Ovary (tissue), 10 donors: ENCODE measurements at regions of chr6 and their contacts with region 1.

Region 1: GRCh38 chr6:110322874-110323242 is 35.3 kb downstream of the METTL24 start:
- DNase-seq: no peak
- H3K4me3 ChIP-seq: no peak overlapping the region
- H3K27ac ChIP-seq: no peak overlapping the region
- H3K4me1 ChIP-seq: peaks cover 16% of the 10 kb centered on the region
- H3K27me3 ChIP-seq: no peaks in the 10 kb centered on the region
- CTCF ChIP-seq: no peak
- EP300 ChIP-seq: no peak
- POLR2A ChIP-seq: no peak

Region 2: DNA sequence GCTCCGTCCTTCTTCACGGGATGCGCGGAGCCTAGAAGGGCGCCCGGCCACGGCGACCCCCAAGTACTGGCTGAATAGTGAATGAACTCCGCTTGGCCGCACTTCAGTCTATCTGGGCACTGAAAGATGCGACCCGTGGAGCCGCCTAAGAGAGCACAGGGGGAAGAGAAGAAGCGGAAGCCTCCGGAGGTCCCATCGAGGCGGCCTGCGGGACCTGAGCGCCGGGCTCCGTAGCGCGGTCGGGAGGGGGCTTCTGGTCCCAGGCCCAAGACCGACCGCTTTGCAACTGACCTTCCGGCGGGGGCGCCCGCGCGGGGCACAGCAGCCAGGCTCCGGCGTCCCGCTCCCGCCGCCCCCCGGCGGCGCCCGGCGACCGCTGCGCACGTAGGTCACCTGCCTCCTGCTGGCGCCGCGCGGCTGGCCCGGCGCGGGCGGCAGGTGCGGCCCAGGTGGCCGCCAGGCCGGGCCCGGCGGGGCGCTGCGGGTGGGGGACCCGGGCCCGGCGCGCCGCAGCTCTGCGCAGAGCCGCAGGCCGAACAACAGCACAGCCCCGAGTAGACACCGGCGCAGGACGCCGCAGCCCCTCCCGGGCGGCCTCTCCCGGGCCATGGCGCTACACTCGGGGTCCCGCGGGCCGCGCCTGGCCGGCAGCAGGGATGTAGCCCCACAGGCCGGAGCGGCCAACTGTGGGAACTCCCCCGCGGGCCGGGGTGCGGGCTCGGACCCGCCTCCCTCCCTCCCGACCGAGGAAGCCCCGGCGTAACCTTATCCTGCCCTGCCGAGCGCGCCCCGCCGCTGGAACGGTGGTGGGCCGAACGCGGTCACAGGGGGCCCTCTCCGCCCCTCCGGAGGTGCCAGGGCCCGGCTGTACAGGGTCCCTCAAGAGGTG is 35.0 kb after region 1 on chr6 and contains the start of gene METTL24:
- intact Hi-C with region 1: loop called in 1 of 4 experiments (anchors 5 kb)
- DNase-seq: peak; percentile 57 to 72 (median 65)
- H3K4me3 ChIP-seq: peak within 1 kb of the TSS; percentile 72
- H3K27ac ChIP-seq: peak within 1 kb of the TSS; percentile 69 to 93
- H3K4me1 ChIP-seq: peaks cover 3% of the 10 kb centered on the region
- H3K27me3 ChIP-seq: no peaks in the 10 kb centered on the region
- CTCF ChIP-seq: no peak
- EP300 ChIP-seq: no peak
- POLR2A ChIP-seq: no peak
- total RNA-seq, gene METTL24: 5.7 to 13.5 (median 9.2) TPM

Region 3: DNA sequence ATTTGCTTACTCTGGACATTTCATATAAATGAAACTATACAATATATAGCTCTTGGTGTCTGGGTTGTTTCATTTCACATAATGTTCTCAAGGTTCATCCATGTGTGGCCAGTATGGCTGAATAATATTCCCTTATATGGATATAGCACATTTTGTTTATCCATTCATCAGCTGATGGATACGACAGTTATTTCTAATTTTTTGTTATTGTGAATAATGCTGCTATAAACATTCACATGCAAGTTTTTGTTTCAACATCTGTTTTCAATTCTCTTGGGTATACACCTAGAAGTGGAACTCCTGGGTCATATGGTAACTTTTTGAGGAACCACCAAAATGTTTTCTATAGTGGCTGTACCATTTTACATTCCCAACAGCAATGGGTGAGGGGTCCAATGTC is 391.3 kb after region 1 on chr6:
- intact Hi-C with region 1: no loop called
- DNase-seq: no peak
- H3K4me3 ChIP-seq: no peak overlapping the region
- H3K27ac ChIP-seq: no peak overlapping the region
- H3K4me1 ChIP-seq: no peaks in the 10 kb centered on the region
- H3K27me3 ChIP-seq: no peaks in the 10 kb centered on the region
- CTCF ChIP-seq: no peak
- EP300 ChIP-seq: no peak
- POLR2A ChIP-seq: no peak